ENCODE measurements at regions of chr5 and their contacts with region 1.

Region 1: GRCh38 chr5:180210961-180211770 is 2.2 kb upstream of the RASGEF1C start:
- DNase-seq: no peak
- H3K4me3 ChIP-seq: no peak overlapping the region
- H3K27ac ChIP-seq: no peak overlapping the region
- H3K4me1 ChIP-seq: peaks cover 0 to 23% (median 11%) of the 10 kb centered on the region in 4 experiments
- H3K27me3 ChIP-seq: peaks cover 0 to 22% (median 9%) of the 10 kb centered on the region in 5 experiments

Region 2: GRCh38 chr5:179914032-179914755 is 297.0 kb before region 1 on chr5:
- CTCF ChIA-PET with region 1: no interaction called
- POLR2A ChIA-PET with region 1: no interaction called
- DNase-seq: no peak
- H3K4me3 ChIP-seq: no peak overlapping the region
- H3K27ac ChIP-seq: no peak overlapping the region
- H3K4me1 ChIP-seq: peaks cover 0 to 12% (median 2%) of the 10 kb centered on the region in 4 experiments
- H3K27me3 ChIP-seq: no peaks in the 10 kb centered on the region

Region 3: DNA sequence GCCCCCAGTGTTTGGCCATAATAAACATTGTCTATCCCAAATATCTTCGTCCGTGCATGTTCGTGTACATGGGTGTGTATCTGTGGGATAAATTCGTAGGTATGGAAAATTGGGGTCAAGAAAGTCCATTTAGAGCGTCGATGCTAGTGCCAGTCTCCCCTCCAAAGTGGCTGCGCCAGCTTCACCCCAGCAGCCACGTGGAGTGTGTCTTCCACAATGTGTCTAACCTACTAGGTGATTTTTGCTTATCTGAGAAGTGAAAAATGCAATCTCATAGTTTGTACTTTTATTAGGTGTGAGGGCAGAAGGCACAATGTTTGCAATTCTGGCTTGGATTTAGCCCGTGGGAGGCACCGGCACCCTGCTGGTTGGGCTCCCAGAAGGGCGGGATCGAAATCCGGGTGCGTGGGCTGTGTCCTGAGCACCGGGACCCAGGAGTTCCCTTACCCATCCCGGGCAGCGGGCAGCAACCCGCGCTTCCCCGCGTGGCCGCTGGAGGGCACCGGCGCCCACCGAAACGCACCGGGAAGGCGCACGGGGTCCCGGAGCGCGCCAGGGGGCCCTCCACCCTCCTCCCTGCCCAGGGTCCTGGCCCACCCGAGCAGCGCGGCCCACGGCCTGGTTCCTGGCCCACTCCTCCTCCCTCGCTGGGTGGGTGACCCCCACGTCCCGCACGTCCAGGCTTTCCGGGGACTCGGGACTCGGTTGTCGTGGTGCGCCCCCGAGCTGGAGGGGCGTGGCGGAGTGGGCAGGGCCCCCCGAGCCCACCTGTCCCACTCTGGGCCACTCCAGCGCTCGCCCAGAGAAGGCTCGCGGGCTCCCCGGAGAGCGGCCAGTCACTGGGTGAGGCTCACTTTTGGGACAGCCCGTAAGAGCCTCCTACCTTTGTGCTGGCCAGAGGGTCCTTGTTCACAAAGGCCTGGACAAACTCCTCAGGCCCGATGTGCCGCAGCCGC is 84.2 kb before region 1 on chr5:
- CTCF ChIA-PET with region 1: interaction called, 12 read pairs
- POLR2A ChIA-PET with region 1: no interaction called
- DNase-seq: peak; percentile 29 to 39 (median 36)
- H3K4me3 ChIP-seq: no peak overlapping the region
- H3K27ac ChIP-seq: no peak overlapping the region
- H3K4me1 ChIP-seq: peaks cover 0 to 8% (median 3%) of the 10 kb centered on the region in 4 experiments
- H3K27me3 ChIP-seq: peaks cover 0 to 8% (median 0%) of the 10 kb centered on the region in 5 experiments

Region 4: DNA sequence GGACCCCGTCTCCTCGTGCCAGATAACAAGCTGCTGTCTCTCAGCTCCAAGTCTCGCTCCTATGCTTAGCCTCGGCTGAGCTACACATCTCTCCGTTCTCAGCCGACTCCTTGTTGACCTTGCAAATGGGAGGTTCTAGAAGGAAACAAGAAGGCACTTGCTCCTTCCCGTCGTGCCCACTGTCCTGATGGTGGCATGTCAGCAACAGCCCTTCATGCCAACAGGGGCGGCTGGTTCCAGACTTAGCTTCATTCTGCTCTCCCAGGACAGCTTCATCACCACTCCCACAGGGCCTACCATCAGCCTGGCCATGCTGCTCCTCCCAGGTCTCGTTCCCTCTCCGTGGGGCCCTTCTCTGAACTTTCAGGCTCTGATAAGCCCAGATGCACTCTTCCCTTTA is 10.9 kb after region 1 on chr5:
- CTCF ChIA-PET with region 1: no interaction called
- POLR2A ChIA-PET with region 1: no interaction called
- DNase-seq: no peak
- H3K4me3 ChIP-seq: no peak overlapping the region
- H3K27ac ChIP-seq: no peak overlapping the region
- H3K4me1 ChIP-seq: no peaks in the 10 kb centered on the region
- H3K27me3 ChIP-seq: no peaks in the 10 kb centered on the region

Region 5: GRCh38 chr5:180233729-180234128 is 22.6 kb after region 1 on chr5:
- CTCF ChIA-PET with region 1: no interaction called
- POLR2A ChIA-PET with region 1: no interaction called
- DNase-seq: no peak
- H3K4me3 ChIP-seq: no peak overlapping the region
- H3K27ac ChIP-seq: no peak overlapping the region
- H3K4me1 ChIP-seq: no peaks in the 10 kb centered on the region
- H3K27me3 ChIP-seq: no peaks in the 10 kb centered on the region

Measured in common myeloid progenitor, CD34-positive (primary cell).